ENCODE measurements at regions of chr14 and their contacts with region 1.

Region 1: DNA sequence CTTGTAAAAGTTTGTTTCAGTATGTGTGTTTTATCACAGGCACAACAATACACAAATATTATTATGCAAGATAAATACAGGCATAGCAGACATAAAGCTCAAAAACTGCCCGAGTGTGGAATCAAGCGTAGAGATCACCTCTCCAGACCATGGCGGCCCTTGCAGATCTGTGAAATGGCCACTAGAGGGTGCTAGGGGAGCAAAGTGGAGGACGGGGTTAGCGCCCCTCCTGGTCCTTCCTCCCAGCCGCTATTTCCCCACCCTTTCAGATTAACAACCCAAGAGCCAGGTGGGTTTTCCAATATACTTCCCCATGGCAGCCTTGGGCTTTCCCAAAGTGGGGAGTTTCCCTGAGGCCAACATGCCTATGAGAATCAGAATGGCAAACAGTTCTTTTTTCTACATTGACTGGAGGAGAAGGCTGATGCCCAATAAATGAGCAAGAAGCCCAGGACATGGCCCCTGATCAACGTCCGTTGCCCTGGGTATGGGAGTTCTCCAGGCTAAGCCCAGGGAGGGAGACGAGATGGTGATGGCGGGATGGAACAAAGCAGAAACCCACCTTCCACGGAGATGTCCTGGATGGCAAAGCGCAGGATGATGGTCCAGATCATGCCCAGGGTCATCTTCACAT is 67.4 kb downstream of the ACTN1 start:
- DNase-seq: peak; percentile 71
- ATAC-seq: peak; percentile 83 to 94

Region 2: DNA sequence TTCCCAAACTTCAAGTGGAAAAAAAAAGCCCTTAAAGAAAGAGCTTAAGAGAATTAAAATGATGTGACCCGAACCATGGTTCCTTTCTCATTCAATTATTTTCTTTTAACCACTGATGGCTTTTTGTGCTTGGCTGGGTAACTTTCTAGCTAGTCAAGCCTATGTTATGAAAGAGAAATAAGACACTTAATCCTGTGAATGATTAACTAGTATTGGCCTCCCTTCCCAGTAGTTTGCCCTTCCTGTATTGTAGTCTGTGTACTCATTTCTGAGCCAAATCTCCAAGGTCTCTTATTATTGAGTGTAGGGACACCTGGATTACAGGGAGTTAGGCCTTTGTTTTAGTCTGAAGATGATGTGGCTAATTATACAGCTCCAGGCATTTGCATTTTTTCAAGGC is 739.1 kb before region 1 on chr14:
- intact Hi-C with region 1: no loop called
- DNase-seq: no peak
- ATAC-seq: no peak

Region 3: DNA sequence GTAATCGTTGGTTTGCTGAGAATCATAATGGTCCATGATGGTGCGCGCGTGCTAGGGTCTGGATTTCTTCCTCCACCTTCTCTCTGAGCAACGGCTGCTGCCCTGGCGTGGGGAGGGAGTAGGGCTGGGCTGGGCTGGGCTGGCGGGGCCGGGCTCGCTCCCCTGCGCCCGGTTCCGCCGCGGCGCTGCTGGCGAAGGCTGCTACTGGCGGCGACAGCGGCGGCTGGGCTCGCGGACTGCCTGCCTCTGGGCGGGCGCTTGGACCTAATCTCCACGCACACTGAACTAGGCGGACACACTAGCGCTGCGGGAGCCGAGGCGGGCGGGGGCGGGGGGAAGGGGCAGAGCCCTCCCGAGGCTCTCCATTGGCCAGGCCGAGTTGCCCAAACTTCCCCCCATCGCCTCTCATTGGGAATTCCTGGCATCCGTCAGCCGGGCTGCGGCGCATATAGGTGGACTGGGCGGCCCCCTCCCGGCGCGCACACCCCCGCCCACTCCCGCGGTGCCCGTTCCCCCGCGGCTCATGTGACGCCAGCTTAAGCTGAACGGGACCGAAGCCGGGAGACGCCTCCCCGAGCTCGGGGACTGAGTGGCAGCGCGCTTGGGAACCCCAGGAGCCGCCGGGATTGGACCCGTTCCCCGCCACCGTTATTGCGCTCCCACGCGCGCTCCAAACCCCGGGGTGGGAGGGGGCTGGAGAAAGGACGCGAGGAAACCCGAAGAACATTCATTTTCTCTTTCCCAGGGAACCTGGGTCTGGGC is 67.5 kb after region 1 on chr14 and contains the start of gene ACTN1:
- intact Hi-C with region 1: loop called (anchors 5 to 10 kb)
- DNase-seq: peak; percentile 96
- ATAC-seq: peak; percentile 83
- total RNA-seq, gene ACTN1: 160 to 319 TPM

Region 4: DNA sequence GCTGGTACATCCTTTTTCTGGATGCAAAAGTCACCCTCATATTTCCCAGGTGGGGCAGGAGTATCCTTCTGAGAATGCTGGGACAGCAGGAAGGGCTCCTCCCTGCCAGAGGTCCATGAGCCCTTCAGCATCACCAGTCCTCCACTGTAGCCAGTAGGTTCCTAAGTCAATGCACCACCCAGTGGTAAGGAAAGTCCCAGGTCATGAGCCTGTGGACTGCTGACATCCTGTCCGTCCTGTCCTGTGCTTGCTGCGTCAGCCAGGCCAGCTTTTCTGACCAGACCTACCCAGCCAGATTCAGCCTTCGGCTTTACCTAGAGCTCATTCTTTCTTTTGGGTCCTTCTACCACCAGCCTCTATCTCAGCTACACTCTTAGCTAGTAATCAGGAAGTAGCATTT is 90.4 kb after region 1 on chr14:
- intact Hi-C with region 1: loop called in 1 of 2 experiments (anchors 5 kb)
- DNase-seq: peak; percentile 44
- ATAC-seq: peak; percentile 63 to 70

Region 5: DNA sequence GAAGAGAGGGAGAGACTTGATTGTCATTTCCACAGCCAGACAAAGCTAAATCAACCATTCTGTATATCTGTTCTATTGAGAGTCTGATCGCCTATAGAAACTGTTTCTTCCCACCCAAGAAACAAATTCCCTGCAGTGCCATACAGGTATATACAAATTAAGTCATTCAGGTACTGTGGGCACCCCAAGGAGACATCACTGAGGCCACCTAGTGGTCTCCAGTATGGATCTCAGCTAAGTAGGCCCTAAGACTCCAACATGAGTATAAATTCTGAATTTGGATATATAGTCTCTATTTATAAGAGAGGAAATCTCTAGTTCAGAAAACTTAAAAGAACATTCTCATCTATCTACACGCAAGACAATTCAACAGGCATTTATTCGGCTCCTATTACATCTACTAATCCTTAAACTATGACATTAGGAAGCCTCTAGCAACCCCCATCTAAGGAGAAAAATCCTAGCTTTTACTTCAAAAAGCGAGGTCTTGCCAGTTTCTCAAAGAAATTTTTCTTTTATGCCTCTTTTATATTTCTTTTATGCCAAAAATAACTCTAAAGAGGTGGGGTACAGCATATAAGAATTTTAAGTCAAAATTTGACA is 178.6 kb after region 1 on chr14:
- intact Hi-C with region 1: loop called (anchors 5 to 10 kb)
- DNase-seq: no peak
- ATAC-seq: peak in 1 of 2 donors; percentile 47

Region 6: GRCh38 chr14:69451956-69452355 is 540.2 kb after region 1 on chr14:
- intact Hi-C with region 1: no loop called
- DNase-seq: no peak
- ATAC-seq: no peak

Region 7: DNA sequence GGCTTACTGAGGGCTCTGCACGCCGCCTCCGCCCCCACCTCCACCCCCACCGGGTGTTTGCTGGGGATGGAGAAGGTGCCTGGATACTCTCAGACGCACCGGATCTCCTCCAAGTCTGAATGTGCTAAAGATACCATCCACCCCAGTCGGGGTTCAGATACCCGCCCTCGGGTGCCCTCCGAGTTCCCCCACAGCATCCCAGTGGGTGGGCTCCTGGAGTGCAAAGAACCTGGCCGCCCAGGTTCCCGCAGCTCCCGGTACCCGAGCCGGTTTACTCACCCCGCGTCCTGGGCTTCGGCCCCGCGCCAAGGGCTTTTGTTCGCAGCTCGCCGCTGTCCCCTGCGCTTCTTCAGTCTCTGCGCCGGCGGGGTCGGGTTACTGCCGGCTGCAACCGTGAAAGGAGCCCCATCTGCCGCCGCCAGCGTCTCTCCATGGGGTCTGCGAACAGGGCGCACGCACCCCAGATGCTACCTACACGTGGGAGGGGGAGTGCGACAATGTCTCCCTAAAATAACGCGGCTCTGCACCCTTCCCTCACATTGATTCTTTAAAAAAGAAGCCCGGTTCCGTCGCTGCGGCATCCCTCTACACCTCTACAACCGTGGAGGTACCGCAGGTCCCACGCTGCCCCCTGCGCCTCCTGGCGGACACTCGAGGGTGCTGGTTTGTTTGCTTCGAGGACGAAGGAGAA is 662.7 kb after region 1 on chr14 and contains the start of gene CCDC177:
- intact Hi-C with region 1: no loop called
- DNase-seq: peak; percentile 55
- ATAC-seq: peak; percentile 48 to 64
- total RNA-seq, gene CCDC177: not detected